ENCODE measurements at regions of chr9 and their contacts with region 1.

Region 1: GRCh38 chr9:35616681-35617459 is 1.3 kb downstream of the CD72 start:
- DNase-seq: peak; percentile 78
- ATAC-seq: peak; percentile 65
- H3K4me3 Mint-ChIP-seq: peak overlapping the region; percentile 79
- H3K27ac Mint-ChIP-seq: peak overlapping the region; percentile 92
- H3K4me1 Mint-ChIP-seq: peaks cover 62% of the 10 kb centered on the region
- H3K27me3 Mint-ChIP-seq: no peaks in the 10 kb centered on the region

Region 2: GRCh38 chr9:35367451-35367850 is 249.4 kb before region 1 on chr9:
- CTCF ChIA-PET with region 1: no interaction called
- POLR2A ChIA-PET with region 1: no interaction called
- DNase-seq: no peak
- ATAC-seq: no peak
- H3K4me3 Mint-ChIP-seq: no peak overlapping the region
- H3K27ac Mint-ChIP-seq: no peak overlapping the region
- H3K4me1 Mint-ChIP-seq: no peaks in the 10 kb centered on the region
- H3K27me3 Mint-ChIP-seq: no peaks in the 10 kb centered on the region

Region 3: GRCh38 chr9:35508069-35508468 is 108.8 kb before region 1 on chr9:
- CTCF ChIA-PET with region 1: no interaction called
- POLR2A ChIA-PET with region 1: no interaction called
- DNase-seq: no peak
- ATAC-seq: no peak
- H3K4me3 Mint-ChIP-seq: no peak overlapping the region
- H3K27ac Mint-ChIP-seq: no peak overlapping the region
- H3K4me1 Mint-ChIP-seq: peaks cover 4% of the 10 kb centered on the region
- H3K27me3 Mint-ChIP-seq: peaks cover 13% of the 10 kb centered on the region

Region 4: DNA sequence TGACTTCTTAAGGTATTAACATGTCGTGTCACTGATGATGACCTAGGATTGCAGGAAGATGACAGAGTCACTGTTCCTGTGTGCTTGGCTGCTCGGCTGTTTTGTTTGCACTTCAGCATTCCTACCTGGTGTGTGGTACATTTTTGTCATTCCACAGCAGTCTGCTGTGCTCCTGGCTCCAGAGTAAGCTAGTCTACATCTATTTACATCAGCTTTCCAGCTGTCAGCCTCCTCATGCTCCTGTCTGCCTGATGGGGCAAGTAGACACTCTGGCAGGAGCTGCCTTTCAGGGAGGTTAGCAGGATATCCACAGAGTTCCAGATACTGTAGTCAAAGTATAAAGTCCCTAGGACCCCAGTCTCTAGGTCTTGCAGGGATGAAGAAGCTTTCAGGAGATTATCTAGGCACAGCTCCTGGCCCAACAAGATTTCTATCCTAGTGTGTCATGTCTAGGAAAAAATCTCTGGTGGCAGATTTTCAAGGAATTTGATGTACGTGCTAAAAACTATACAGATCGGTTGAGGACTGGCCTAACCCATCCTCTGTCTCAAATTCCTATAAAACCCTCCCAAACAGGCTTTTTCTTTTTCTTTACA is 98.5 kb before region 1 on chr9:
- CTCF ChIA-PET with region 1: no interaction called
- POLR2A ChIA-PET with region 1: no interaction called
- DNase-seq: no peak
- ATAC-seq: no peak
- H3K4me3 Mint-ChIP-seq: no peak overlapping the region
- H3K27ac Mint-ChIP-seq: no peak overlapping the region
- H3K4me1 Mint-ChIP-seq: no peaks in the 10 kb centered on the region
- H3K27me3 Mint-ChIP-seq: no peaks in the 10 kb centered on the region

Region 5: GRCh38 chr9:35603987-35604577 is 12.8 kb before region 1 on chr9:
- CTCF ChIA-PET with region 1: interaction called, 20 read pairs
- POLR2A ChIA-PET with region 1: interaction called, 4 read pairs
- DNase-seq: peak; percentile 100
- ATAC-seq: peak; percentile 88
- H3K4me3 Mint-ChIP-seq: peak overlapping the region; percentile 90
- H3K27ac Mint-ChIP-seq: peak overlapping the region; percentile 96
- H3K4me1 Mint-ChIP-seq: peaks cover 37% of the 10 kb centered on the region
- H3K27me3 Mint-ChIP-seq: no peaks in the 10 kb centered on the region

Region 6: DNA sequence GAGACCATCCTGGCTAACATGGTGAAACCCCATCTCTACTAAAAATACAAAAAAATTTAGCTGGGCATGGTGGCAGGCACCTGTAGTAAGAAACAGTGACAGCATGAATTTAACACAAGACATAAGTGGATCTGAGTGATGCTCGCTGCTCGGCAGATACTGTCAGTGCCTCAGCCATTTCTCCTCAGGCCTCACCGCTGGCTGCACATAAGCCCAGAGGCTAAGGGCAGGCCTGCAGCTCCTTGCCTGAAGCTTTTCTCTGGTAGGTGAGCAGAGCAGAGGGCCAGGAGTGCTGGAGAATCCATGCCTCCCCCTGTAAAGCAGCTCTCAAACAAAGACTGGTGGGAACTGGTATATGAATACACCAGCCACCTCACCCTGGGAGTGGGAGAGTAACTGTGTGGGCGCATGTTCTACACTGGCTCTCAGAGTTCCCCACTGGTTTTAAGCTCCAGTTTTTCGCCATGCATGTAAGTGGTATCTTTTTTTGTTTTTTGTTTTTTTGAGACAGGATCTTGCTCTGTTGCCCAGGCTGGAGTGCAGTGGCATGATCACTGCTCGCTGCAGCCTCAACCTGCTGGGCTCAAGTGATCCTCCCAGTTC is 11.6 kb after region 1 on chr9:
- CTCF ChIA-PET with region 1: interaction called, 12 read pairs
- POLR2A ChIA-PET with region 1: no interaction called
- DNase-seq: no peak
- ATAC-seq: no peak
- H3K4me3 Mint-ChIP-seq: no peak overlapping the region
- H3K27ac Mint-ChIP-seq: no peak overlapping the region
- H3K4me1 Mint-ChIP-seq: peaks cover 16% of the 10 kb centered on the region
- H3K27me3 Mint-ChIP-seq: no peaks in the 10 kb centered on the region

Region 7: GRCh38 chr9:35636135-35636876 is 19.4 kb after region 1 on chr9:
- CTCF ChIA-PET with region 1: interaction called, 37 read pairs
- POLR2A ChIA-PET with region 1: interaction called, 11 read pairs
- DNase-seq: no peak
- ATAC-seq: no peak
- H3K4me3 Mint-ChIP-seq: no peak overlapping the region
- H3K27ac Mint-ChIP-seq: no peak overlapping the region
- H3K4me1 Mint-ChIP-seq: peaks cover 56% of the 10 kb centered on the region
- H3K27me3 Mint-ChIP-seq: no peaks in the 10 kb centered on the region

Region 8: GRCh38 chr9:35657546-35658136 is 40.8 kb after region 1 on chr9 and contains the start of gene RMRP:
- CTCF ChIA-PET with region 1: interaction called, 272 read pairs
- POLR2A ChIA-PET with region 1: interaction called, 10 read pairs
- DNase-seq: peak; percentile 94
- ATAC-seq: peak; percentile 92
- H3K4me3 Mint-ChIP-seq: peak within 1 kb of the TSS; percentile 92
- H3K27ac Mint-ChIP-seq: peak within 1 kb of the TSS; percentile 97
- H3K4me1 Mint-ChIP-seq: peaks cover 62% of the 10 kb centered on the region
- H3K27me3 Mint-ChIP-seq: peaks cover 3% of the 10 kb centered on the region
- total RNA-seq, gene RMRP: 7,126 to 12,592 TPM

Measured in activated CD8-positive, alpha-beta T cell treated with anti-CD3 and anti-CD28 coated beads, Interleukin-2, amount 10 ng/mL, durations not matched to agents 7 days and 5 days (primary cell).